ENCODE measurements at regions of chr3 and their contacts with region 1.

Region 1: DNA sequence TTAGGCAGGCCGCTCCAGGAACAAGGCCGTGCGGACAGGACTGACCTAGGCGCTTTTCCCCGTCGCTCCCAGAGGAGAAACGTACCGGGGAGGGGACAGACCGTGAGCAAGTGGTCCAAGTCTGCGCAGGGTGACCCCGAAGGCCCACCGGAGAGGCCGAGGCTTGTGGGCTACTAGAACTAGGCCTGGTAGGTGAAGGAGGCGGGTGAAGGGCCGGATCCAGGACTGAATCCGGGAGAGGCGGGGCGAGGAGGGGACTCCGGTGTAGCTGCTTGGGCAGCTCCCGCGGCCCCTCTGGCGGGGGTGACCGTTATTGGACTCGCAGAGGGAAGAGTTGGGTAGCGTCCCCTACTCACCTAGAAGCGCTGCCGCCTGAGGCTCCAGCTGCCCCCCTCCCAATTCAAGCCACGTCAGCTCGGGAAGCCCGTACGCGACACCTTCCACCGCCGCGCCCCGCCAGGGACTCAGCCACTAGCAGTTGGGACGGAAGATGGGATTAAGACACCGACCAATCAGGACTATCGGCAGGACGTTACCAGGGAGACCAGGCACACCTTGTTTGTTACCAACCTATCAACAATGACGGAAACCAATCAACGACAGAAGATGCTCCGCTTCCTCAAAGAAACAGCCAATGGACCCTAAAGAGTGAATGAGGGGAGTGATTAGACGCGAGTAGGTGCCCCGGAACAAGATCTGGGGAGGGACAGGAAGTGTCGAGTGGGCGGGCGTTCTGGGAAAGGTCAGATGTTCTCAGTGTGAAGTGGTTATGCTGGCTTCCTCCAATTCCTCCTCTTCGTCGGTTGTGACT is at the start of gene GOLGB1:
- DNase-seq: peak; percentile 95 to 97
- H3K4me3 ChIP-seq: peak within 1 kb of the TSS; percentile 86
- H3K4me3 Mint-ChIP-seq: no peak within 1 kb of the TSS
- H3K27ac Mint-ChIP-seq: no peak within 1 kb of the TSS
- H3K4me1 ChIP-seq: 0 out of 2 replicates have a peak, but pooled peaks cover 8% of the 10 kb centered on the region
- H3K4me1 Mint-ChIP-seq: peaks cover 14% of the 10 kb centered on the region
- H3K27me3 ChIP-seq: no peaks in the 10 kb centered on the region
- H3K27me3 Mint-ChIP-seq: no peaks in the 10 kb centered on the region
- CTCF ChIP-seq: no peak
- total RNA-seq, gene GOLGB1: 31.5 and 34.3 TPM in 2 replicates

Region 2: GRCh38 chr3:121660356-121661171 is 88.9 kb before region 1 on chr3 and contains the start of gene HCLS1:
- CTCF ChIA-PET with region 1: no interaction called
- POLR2A ChIA-PET with region 1: no interaction called
- intact Hi-C with region 1: loop called (anchors 5 kb)
- DNase-seq: no peak
- H3K4me3 ChIP-seq: no peak within 1 kb of the TSS
- H3K4me3 Mint-ChIP-seq: no peak within 1 kb of the TSS
- H3K27ac Mint-ChIP-seq: peak within 1 kb of the TSS; percentile 22
- H3K4me1 ChIP-seq: peaks cover 45% of the 10 kb centered on the region
- H3K4me1 Mint-ChIP-seq: peaks cover 29% of the 10 kb centered on the region
- H3K27me3 ChIP-seq: no peaks in the 10 kb centered on the region
- H3K27me3 Mint-ChIP-seq: no peaks in the 10 kb centered on the region
- CTCF ChIP-seq: no peak
- total RNA-seq, gene HCLS1: 0.45 and 1.00 TPM in 2 replicates

Region 3: DNA sequence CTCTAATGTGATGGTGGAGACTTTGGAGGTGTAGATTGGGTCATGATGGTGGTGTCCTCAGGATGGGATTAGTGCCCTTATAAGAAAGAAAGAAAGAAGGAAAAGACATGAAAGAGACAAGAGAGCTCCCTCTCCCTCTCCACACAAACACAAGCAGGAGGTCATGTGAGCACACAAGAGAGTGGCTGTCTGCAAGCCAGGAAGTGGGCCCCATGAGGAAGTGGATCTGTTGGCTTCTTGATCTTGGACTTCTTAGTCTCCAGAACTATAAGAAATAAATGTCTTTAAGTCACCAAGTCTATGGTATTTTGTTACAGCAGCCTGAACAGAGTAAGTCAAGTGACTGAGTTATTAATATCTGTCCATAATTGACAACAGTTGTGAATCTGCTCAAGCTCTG is 68.3 kb after region 1 on chr3:
- CTCF ChIA-PET with region 1: no interaction called
- POLR2A ChIA-PET with region 1: no interaction called
- intact Hi-C with region 1: no loop called
- DNase-seq: no peak
- H3K4me3 ChIP-seq: no peak overlapping the region
- H3K4me3 Mint-ChIP-seq: no peak overlapping the region
- H3K27ac Mint-ChIP-seq: no peak overlapping the region
- H3K4me1 ChIP-seq: no peaks in the 10 kb centered on the region
- H3K4me1 Mint-ChIP-seq: no peaks in the 10 kb centered on the region
- H3K27me3 ChIP-seq: no peaks in the 10 kb centered on the region
- H3K27me3 Mint-ChIP-seq: no peaks in the 10 kb centered on the region
- CTCF ChIP-seq: no peak

Region 4: GRCh38 chr3:121995161-121996137 is 246.0 kb after region 1 on chr3:
- CTCF ChIA-PET with region 1: no interaction called
- POLR2A ChIA-PET with region 1: no interaction called
- intact Hi-C with region 1: loop called (anchors 10 kb)
- DNase-seq: peak; percentile 72 to 76
- H3K4me3 ChIP-seq: no peak overlapping the region
- H3K4me3 Mint-ChIP-seq: no peak overlapping the region
- H3K27ac Mint-ChIP-seq: no peak overlapping the region
- H3K4me1 ChIP-seq: peaks cover 32% of the 10 kb centered on the region
- H3K4me1 Mint-ChIP-seq: peaks cover 24% of the 10 kb centered on the region
- H3K27me3 ChIP-seq: no peaks in the 10 kb centered on the region
- H3K27me3 Mint-ChIP-seq: no peaks in the 10 kb centered on the region
- CTCF ChIP-seq: peak; percentile 49 to 72